ENCODE measurements at regions of chr10 and their contacts with region 1.

Region 1: DNA sequence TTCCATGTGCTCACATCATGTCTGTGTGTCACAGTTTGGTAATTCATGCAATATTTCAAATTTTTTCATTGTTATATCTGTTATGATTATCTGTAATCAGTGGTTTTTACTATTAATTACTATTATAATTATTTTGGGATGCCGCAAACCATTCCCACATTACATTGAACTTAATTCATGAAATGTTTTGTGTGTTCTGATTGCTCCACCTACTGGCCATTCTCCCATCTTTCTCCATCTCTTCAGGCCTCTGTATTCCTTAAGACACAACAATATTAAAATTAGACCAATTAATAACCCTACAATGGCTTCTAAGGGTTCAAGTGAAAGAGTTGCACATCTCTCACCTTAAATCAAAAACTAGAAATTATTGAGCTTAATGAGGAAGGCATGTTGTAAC is 398.5 kb downstream of the PCDH15 start:
- DNase-seq: peak; percentile 53
- H3K4me3 ChIP-seq: no peak overlapping the region
- H3K27ac ChIP-seq: no peak overlapping the region
- H3K4me1 ChIP-seq: no peaks in the 10 kb centered on the region
- H3K27me3 ChIP-seq: no peaks in the 10 kb centered on the region
- CTCF ChIP-seq: peak; percentile 16 to 44
- POLR2A ChIP-seq: no peak

Region 2: DNA sequence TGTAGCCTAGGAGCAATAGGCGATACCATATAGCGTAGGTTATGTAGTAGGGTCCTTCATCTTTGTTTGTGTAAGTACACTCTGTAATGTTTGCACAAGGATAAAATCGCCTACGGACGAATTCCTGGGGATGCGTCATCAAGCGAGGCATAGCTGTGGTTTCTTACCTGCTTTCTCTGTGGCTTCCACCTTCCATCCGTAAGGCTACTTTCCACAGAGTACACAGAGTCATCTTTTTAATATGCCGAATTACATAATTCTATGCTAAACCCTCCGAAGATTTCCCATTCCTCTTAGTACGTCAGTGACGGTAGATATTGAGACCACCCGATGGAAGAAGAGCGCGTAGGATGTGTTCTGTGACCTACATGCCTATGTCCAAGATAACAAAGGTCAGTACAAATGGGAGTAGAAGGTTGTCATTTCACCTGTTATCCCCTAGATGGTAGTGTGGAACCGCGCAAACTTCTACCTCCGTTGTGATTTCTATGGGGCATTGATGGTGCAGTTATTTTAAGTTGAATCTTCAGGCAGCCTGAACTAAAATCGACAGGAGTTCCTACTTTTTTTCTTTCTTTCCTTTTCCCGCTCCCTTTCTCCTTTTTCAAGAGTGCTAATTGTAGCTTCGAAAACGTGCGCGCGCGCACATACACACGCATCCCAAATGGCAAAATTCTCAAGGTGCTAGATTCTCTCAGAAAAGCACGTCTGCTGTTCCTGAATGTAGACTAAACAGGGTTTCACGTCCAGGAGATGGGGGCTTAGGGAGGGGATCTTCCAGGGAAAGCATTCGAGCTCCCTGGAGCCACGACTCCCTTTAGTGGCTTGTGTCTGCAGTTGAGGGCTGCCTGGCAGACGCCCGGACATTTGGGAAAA is 1518.3 kb before region 1 on chr10:
- CTCF ChIA-PET with region 1: no interaction called
- POLR2A ChIA-PET with region 1: no interaction called
- dilution Hi-C with region 1: no loop called
- intact Hi-C with region 1: loop called (anchors 1 kb)
- DNase-seq: peak; percentile 67
- H3K4me3 ChIP-seq: no peak overlapping the region
- H3K27ac ChIP-seq: no peak overlapping the region
- H3K4me1 ChIP-seq: peaks cover 17% of the 10 kb centered on the region
- H3K27me3 ChIP-seq: peaks cover 0 to 6% of the 10 kb centered on the region in 2 experiments
- CTCF ChIP-seq: peak; percentile 70 to 72
- POLR2A ChIP-seq: no peak

Region 3: GRCh38 chr10:52951824-52952223 is 1450.8 kb before region 1 on chr10:
- CTCF ChIA-PET with region 1: interaction called, 4 read pairs
- POLR2A ChIA-PET with region 1: no interaction called
- dilution Hi-C with region 1: no loop called
- intact Hi-C with region 1: loop called (anchors 1 kb)
- DNase-seq: peak; percentile 73
- H3K4me3 ChIP-seq: no peak overlapping the region
- H3K27ac ChIP-seq: no peak overlapping the region
- H3K4me1 ChIP-seq: no peaks in the 10 kb centered on the region
- H3K27me3 ChIP-seq: no peaks in the 10 kb centered on the region
- CTCF ChIP-seq: peak; percentile 55 to 71
- POLR2A ChIP-seq: no peak

Region 4: DNA sequence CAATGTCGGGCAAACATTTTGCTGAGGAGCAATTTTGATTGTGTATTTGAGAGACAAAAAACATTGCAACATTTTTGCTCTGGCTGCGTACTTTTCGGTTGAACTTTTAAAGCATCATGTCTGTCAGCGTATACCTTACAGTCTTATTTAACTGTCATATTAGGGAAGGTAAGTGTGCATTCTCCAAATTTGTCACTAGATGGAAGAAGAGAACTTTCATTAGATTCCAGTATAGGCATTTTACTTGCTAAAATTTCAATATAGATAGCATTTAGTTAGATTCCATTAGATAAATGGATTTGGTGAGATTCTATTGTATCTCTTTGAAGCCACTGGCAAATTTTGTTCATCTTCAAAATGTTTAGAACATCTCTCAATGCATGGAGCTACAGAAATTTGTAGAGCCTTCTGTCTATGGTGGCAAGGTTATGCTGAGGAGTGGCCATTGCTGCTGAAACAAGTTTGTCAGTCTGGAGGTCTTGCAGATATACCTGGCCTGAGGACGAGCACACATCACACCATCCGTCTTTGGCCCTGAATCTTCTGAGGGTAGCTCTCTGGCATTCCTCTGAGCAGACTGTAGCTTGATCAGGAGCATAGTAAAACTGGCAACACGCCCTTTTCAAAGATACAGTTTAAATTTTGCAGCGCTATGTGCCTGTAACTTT is 1192.5 kb before region 1 on chr10:
- CTCF ChIA-PET with region 1: interaction called, 5 read pairs
- POLR2A ChIA-PET with region 1: no interaction called
- dilution Hi-C with region 1: no loop called
- intact Hi-C with region 1: loop called (anchors 2 kb)
- DNase-seq: peak; percentile 51
- H3K4me3 ChIP-seq: no peak overlapping the region
- H3K27ac ChIP-seq: no peak overlapping the region
- H3K4me1 ChIP-seq: no peaks in the 10 kb centered on the region
- H3K27me3 ChIP-seq: no peaks in the 10 kb centered on the region
- CTCF ChIP-seq: peak; percentile 13 to 14
- POLR2A ChIP-seq: no peak

Region 5: DNA sequence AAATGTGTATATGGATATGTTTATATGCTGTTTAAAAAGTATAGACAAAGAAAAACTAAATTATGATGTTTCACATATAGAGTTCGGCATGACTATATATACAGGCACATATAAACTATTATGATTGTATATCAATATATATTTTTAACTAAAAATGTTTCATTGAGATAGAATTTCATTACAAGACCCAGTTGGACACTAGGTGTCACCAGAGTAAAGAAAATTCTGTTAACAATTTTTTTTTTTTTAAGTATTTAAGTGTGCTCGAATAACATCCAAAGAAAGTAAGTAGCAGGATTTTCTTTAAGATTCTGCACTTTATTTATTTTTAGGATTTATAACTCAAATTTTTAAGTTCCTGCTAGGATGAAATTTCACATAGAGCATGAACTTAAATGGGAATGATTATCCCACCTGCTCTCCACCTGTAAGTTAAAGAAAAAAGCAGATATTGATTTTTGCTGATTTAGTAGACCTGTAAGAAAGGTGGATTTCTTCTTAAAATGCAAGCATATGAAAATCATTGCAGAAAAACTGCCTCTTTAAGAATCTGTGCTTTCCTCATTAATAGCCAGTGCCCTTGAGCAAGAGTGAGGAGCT is 563.0 kb before region 1 on chr10:
- CTCF ChIA-PET with region 1: interaction called, 14 read pairs
- POLR2A ChIA-PET with region 1: no interaction called
- dilution Hi-C with region 1: no loop called
- intact Hi-C with region 1: loop called (anchors 1 kb)
- DNase-seq: peak; percentile 54
- H3K4me3 ChIP-seq: no peak overlapping the region
- H3K27ac ChIP-seq: no peak overlapping the region
- H3K4me1 ChIP-seq: no peaks in the 10 kb centered on the region
- H3K27me3 ChIP-seq: no peaks in the 10 kb centered on the region
- CTCF ChIP-seq: peak in 1 of 2 donors; percentile 30
- POLR2A ChIP-seq: no peak

Region 6: DNA sequence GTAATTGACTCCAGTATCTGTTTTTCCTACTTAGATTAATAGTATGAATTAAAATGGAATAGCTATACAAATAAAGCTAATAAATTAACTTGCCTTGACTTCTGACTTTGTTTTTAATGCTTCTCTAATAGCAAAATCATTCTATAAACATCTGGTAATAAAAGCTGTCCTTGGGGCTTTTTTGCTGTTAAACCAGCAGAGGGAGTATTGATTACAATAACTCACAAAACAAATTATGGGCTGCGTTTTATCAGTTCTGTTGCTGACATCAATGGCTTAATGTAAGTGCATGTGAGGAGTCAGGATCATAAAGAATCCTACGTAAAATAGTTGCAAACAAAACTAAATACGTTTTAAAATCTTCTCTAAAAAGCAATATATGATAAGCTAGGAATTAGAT is 269.4 kb before region 1 on chr10:
- CTCF ChIA-PET with region 1: interaction called, 18 read pairs
- POLR2A ChIA-PET with region 1: no interaction called
- dilution Hi-C with region 1: no loop called
- intact Hi-C with region 1: loop called (anchors 2 kb)
- DNase-seq: peak; percentile 22
- H3K4me3 ChIP-seq: no peak overlapping the region
- H3K27ac ChIP-seq: no peak overlapping the region
- H3K4me1 ChIP-seq: no peaks in the 10 kb centered on the region
- H3K27me3 ChIP-seq: no peaks in the 10 kb centered on the region
- CTCF ChIP-seq: peak; percentile 22 to 35
- POLR2A ChIP-seq: no peak

Region 7: GRCh38 chr10:54484186-54484585 is 81.6 kb after region 1 on chr10:
- CTCF ChIA-PET with region 1: no interaction called
- POLR2A ChIA-PET with region 1: no interaction called
- dilution Hi-C with region 1: no loop called
- intact Hi-C with region 1: no loop called
- DNase-seq: no peak
- H3K4me3 ChIP-seq: no peak overlapping the region
- H3K27ac ChIP-seq: no peak overlapping the region
- H3K4me1 ChIP-seq: no peaks in the 10 kb centered on the region
- H3K27me3 ChIP-seq: no peaks in the 10 kb centered on the region
- CTCF ChIP-seq: no peak
- POLR2A ChIP-seq: no peak

Region 8: GRCh38 chr10:54769051-54769450 is 366.5 kb after region 1 on chr10:
- CTCF ChIA-PET with region 1: no interaction called
- POLR2A ChIA-PET with region 1: no interaction called
- dilution Hi-C with region 1: no loop called
- intact Hi-C with region 1: no loop called
- DNase-seq: no peak
- H3K4me3 ChIP-seq: no peak overlapping the region
- H3K27ac ChIP-seq: no peak overlapping the region
- H3K4me1 ChIP-seq: no peaks in the 10 kb centered on the region
- H3K27me3 ChIP-seq: no peaks in the 10 kb centered on the region
- CTCF ChIP-seq: no peak
- POLR2A ChIP-seq: no peak

Measured in endothelial cell of umbilical vein (primary cell).